ENCODE measurements at regions of chr12 and their contacts with region 1.

Region 1: GRCh38 chr12:11486623-11487444 is 91.5 kb upstream of the PRB2 start:
- DNase-seq: peak; percentile 36
- H3K4me3 ChIP-seq: no peak overlapping the region
- H3K27me3 ChIP-seq: no peaks in the 10 kb centered on the region; the same call in 1 of the 2 replicates
- CTCF ChIP-seq: peak; percentile 93

Region 2: DNA sequence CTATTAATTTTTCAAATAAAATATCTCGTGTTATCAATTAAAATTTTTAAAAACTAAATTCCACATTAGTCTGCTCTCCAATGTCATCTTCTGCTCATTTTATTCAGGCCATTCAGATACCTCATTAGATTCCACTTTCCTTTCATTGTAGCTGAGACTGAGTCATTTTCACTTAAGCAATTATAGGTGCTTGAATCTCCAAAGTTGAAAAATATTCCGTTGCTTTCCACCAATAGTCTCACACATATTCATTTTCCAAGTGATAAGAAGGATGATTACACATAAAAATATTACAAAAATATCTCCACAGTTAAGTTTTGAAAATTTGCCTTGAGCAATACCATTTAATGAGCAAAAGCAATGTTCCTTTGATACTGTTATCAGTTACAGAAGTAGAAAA is 727.2 kb before region 1 on chr12:
- CTCF ChIA-PET with region 1: interaction called, 17 read pairs
- POLR2A ChIA-PET with region 1: no interaction called
- DNase-seq: no peak
- H3K4me3 ChIP-seq: no peak overlapping the region
- H3K27me3 ChIP-seq: peaks cover 2% of the 10 kb centered on the region; the same call in 1 of the 2 replicates
- CTCF ChIP-seq: no peak

Region 3: GRCh38 chr12:10771132-10771733 is 715.6 kb before region 1 on chr12:
- CTCF ChIA-PET with region 1: interaction called, 68 read pairs
- POLR2A ChIA-PET with region 1: no interaction called
- DNase-seq: no peak
- H3K4me3 ChIP-seq: no peak overlapping the region
- H3K27me3 ChIP-seq: peaks cover 2% of the 10 kb centered on the region
- CTCF ChIP-seq: peak; percentile 54; the same call in 1 of the 2 replicates

Region 4: DNA sequence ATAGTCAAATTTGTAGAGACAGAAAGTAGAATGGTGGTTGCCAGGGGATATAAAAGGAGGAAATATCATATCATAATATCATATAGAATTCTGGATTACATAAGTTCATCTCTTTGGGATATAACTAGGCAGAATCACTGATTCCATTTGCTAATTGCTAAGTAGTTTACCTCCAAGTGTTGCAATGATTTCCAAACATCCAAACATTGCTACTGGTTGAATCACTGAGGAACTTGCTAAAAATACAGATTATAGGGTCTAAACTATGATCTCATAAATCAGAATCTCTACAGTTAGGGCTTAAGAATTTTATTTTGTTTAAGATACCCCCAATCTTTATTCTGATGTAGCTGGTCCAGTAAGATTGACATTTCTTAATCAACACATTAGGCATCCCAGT is 284.0 kb before region 1 on chr12:
- CTCF ChIA-PET with region 1: interaction called, 15 read pairs
- POLR2A ChIA-PET with region 1: no interaction called
- DNase-seq: no peak
- H3K4me3 ChIP-seq: no peak overlapping the region
- H3K27me3 ChIP-seq: no peaks in the 10 kb centered on the region
- CTCF ChIP-seq: no peak

Region 5: DNA sequence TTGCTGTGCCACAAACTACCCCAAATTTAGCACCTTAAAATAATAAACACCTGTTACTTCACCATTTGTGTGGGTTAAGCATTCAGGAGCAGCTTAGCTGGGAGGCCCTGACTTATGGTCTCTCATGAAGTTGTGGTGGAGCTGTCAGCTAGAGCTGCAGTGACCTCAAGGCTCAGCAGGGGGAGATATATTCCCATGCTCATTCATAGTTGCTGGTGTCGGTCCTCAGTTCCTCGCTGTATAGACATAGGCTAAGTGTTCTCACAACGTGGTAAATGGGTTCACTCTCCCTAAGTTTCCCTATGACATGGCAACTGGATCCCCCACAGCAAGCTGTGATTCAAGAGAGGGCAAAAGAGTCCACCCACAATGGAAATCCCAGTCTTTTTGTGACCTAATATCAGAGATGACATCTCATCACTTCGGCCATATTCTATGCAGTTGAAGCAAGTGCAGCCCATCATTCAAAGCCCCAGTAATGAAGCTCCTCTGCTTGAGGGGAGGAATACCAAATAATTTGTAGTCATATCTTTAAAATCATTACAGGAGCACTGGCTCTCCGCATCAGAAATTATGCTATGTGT is 258.4 kb before region 1 on chr12:
- CTCF ChIA-PET with region 1: interaction called, 44 read pairs
- POLR2A ChIA-PET with region 1: no interaction called
- DNase-seq: no peak
- H3K4me3 ChIP-seq: no peak overlapping the region
- H3K27me3 ChIP-seq: no peaks in the 10 kb centered on the region
- CTCF ChIP-seq: peak; percentile 63